ENCODE measurements at regions of chr7 and their contacts with region 1.

Region 1: DNA sequence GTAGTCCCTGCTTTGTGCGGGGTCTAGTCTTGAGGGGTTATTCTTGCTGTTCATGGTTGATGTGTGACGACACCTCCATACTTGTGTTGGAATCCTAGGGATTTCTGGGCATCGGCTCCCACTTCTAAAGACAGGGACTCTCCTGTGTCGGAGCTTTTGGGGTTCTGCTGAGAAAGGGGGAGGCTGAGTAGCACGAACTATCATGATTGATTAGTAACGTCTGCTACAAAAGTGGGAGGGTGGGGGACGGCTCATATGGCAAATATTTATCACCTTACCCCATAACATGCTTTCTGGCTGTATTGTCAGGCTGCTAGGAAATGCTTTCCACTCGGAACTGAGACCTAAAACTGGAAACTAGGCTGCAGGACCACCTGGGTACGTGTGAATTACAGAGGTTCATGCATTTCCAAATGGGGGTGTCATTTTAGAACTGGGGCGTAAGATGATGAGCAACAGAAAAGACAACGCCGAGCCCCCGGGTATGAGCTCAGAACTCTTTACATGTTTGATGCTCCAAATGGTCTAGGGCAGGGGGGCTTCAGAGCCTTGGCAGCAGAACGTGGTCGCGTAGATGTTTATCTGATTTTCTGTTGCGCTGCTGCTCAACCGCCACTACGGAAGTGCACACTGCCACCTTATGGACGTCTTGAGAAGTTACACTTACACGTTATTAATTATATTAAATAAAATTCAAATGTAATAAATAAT is 15.1 kb upstream of the NME8 start:
- DNase-seq: no peak
- H3K4me3 ChIP-seq: peak overlapping the region; percentile 31 to 50 (median 38)
- H3K27ac ChIP-seq: no peak overlapping the region
- H3K4me1 ChIP-seq: peaks cover 0 to 13% (median 5%) of the 10 kb centered on the region in 4 donors
- H3K27me3 ChIP-seq: no peaks in the 10 kb centered on the region
- CTCF ChIP-seq: peak; percentile 64 to 77 (median 76)
- EP300 ChIP-seq: no peak
- POLR2A ChIP-seq: no peak

Region 2: DNA sequence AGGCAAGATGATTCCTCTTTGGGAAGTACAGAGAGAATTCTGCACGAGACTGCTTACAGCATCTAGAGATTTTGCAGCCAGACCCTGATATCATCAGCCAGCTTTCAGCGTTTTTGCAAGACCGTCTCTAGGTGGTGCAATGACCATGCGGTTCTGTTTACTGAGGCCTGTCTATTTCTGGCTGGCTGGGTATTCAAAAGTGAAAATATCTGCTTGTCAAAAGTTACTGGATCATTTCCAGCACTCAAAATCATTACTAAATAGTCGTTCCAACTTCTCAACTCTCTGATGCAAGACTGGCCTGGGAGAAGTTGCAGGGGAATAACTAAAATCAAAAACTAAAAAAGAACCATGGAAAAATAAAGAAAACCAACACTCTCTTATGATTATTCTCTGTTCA is 624.7 kb before region 1 on chr7:
- intact Hi-C with region 1: loop called (anchors 5 kb)
- DNase-seq: peak; percentile 94
- H3K4me3 ChIP-seq: no peak overlapping the region
- H3K27ac ChIP-seq: peak overlapping the region; percentile 71 to 83 (median 76)
- H3K4me1 ChIP-seq: peaks cover 27 to 77% (median 54%) of the 10 kb centered on the region in 4 donors
- H3K27me3 ChIP-seq: no peaks in the 10 kb centered on the region
- CTCF ChIP-seq: peak; percentile 39 to 59 (median 53)
- EP300 ChIP-seq: no peak
- POLR2A ChIP-seq: no peak

Region 3: DNA sequence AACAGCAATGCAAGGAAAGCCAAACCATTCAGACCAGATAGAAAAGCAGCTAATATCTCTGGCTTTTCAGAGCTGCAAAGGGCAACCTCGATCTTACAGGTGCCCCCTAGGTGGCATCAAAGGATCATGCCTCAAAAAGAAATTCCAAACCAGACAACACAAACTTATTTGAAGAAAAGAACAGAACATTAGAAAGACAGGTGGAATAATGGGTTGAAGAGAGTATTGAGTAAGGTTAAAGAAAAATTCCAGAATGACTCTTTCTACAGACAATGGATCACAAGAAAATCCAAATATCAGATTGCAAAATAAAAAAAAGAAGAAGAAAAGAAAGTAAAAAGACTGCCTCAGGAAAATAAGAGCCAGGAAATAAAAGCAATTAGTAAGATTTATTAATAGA is 598.3 kb before region 1 on chr7:
- intact Hi-C with region 1: loop called (anchors 10 kb)
- DNase-seq: no peak
- H3K4me3 ChIP-seq: no peak overlapping the region
- H3K27ac ChIP-seq: no peak overlapping the region
- H3K4me1 ChIP-seq: peaks cover 7 to 9% (median 8%) of the 10 kb centered on the region in 4 donors
- H3K27me3 ChIP-seq: peaks cover 0 to 4% (median 0%) of the 10 kb centered on the region in 4 donors
- CTCF ChIP-seq: peak; percentile 32 to 53 (median 47)
- EP300 ChIP-seq: no peak
- POLR2A ChIP-seq: no peak

Region 4: DNA sequence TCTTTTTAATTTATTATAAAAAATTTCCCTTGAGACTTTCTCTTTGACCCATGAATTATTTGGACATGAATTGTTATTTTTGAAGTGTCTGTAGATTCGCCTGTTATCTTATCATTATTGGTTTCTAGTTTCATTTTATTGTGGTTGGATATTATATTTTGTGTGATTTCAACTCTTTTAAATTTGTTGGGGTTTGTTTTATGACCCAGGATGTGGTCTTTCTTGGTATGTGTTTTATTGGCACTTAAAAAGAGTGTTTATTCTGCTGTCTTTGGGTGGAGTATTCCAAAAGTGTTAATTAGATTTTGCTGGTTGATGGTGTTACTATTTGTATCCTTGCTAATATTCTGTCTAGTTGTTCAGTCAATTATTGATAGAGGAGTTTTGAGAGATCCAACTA is 200.2 kb before region 1 on chr7:
- intact Hi-C with region 1: loop called (anchors 5 kb)
- DNase-seq: no peak
- H3K4me3 ChIP-seq: no peak overlapping the region
- H3K27ac ChIP-seq: no peak overlapping the region
- H3K4me1 ChIP-seq: no peaks in the 10 kb centered on the region
- H3K27me3 ChIP-seq: no peaks in the 10 kb centered on the region
- CTCF ChIP-seq: no peak
- EP300 ChIP-seq: no peak
- POLR2A ChIP-seq: no peak

Region 5: GRCh38 chr7:38002689-38003088 is 169.4 kb after region 1 on chr7:
- intact Hi-C with region 1: no loop called
- DNase-seq: no peak
- H3K4me3 ChIP-seq: no peak overlapping the region
- H3K27ac ChIP-seq: no peak overlapping the region
- H3K4me1 ChIP-seq: peaks cover 11 to 32% (median 14%) of the 10 kb centered on the region in 4 donors
- H3K27me3 ChIP-seq: no peaks in the 10 kb centered on the region
- CTCF ChIP-seq: no peak
- EP300 ChIP-seq: no peak
- POLR2A ChIP-seq: no peak